Left cardiac atrium (tissue), 4 donors: ENCODE measurements at regions of chr9 and their contacts with region 1.

Region 1: DNA sequence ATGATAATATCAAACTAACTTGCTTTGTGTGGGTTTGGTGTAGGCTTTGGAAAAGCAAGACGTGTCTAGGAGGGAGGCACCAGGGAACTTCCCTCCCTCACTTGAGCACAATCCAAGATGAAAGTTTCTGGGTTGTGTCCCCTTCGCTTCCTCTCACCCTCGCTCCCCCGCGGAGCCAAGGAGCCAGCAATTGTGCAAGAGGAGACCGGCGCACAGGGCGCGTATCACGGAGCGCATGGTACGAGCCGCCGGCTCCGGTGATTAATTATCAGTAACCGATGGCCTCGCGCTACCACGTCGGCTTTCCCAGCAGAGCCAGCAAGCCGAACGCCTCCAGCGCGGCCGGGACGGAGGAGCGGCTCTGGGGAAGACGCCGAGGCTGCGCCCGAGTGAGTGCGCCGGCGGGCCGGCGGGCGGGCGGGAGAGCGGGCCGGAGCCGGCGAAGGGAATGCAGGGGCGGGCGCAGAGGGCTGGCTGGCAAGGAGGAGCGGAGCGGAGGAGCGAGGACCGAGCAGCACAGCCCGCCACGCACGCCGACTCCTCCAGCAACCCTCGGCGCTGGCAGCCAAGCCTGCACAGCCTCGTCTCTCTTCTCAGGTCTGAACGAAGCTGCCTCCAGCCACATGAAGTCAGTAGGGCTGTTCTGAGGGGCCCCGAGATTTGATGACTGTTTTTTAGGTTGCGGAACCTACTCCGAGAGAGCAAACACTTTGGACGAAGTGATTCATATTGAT is 143.6 kb downstream of the BNC2 start:
- DNase-seq: peak; percentile 89
- ATAC-seq: peak; percentile 92

Region 2: DNA sequence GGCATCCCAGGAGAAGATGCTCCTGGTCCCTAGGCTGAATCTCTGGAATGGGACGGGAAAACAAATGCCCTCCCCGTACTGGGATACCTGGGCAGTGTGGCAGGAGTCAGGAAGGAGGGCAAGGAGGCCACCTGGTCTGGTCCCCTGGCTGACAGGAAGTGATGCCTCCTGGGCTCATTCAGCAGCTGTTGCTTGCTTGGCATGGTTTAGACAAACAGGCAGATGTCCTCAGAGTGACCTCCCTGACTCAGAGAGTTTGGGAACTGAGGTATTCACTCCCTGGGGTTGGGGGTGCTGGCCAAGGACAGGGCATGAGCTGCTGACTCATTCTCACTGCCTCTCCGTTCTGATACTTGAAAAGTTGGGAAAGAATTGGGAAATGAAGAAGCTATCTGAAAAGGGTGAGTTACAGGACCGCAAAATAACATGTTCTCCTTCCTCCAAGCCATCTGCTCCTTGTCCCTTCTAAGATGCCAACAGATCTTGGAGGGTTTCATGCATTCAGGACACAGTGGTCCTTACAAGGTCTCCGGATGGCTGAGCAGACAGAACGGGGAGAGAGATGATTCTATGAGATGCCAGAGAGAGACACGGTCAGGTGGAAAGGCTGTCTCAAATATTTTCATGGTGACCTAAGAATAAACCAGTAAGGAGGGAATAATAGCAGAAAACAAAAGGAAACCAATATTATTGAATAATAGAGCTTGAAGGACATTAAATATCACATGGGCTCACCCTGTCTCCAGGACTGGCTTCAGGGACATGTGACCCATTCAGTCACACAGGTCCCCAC is 390.9 kb before region 1 on chr9:
- intact Hi-C with region 1: loop called in 1 of 2 experiments (anchors 10 kb)
- DNase-seq: peak; percentile 76
- ATAC-seq: peak; percentile 82 to 95

Region 3: DNA sequence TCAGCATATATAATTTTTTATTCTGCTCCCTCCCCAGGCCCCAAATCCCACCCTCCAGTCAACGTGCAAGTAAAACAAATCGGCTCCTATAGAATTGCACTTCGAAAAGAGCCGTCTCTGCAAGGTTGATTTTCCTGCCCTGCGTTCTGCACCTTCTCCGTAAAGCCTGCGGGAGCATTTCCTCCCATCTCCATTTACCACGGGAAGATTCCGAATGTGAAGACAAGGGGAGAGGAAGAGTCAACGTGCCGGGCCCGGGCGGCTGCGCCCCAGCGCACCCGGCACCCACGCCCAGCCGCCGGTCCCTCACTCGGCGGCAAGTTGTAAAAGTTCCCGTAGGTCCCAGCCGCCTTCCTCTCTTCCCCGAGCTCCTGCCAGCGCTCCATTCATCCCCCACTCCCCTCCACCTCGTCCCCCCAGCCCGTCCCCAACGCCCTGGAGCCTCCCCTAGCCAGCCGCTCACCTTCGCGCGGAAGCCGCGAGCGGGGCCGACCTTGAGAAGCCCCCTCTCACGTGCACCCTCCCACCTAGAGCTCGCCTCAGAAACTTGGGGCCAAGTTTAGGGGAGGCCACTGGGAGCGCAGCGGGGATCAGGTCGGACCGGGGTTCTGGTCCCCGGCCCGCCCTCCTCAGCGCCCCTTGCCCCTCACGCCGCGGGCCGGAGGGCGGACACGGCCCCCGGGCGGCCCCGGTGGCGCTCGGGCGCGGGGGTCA is 143.2 kb after region 1 on chr9:
- intact Hi-C with region 1: loop called in 1 of 2 experiments (anchors 5 kb)
- DNase-seq: peak; percentile 32
- ATAC-seq: peak; percentile 21 to 23